ENCODE measurements at regions of chr2 and their contacts with region 1.

Region 1: DNA sequence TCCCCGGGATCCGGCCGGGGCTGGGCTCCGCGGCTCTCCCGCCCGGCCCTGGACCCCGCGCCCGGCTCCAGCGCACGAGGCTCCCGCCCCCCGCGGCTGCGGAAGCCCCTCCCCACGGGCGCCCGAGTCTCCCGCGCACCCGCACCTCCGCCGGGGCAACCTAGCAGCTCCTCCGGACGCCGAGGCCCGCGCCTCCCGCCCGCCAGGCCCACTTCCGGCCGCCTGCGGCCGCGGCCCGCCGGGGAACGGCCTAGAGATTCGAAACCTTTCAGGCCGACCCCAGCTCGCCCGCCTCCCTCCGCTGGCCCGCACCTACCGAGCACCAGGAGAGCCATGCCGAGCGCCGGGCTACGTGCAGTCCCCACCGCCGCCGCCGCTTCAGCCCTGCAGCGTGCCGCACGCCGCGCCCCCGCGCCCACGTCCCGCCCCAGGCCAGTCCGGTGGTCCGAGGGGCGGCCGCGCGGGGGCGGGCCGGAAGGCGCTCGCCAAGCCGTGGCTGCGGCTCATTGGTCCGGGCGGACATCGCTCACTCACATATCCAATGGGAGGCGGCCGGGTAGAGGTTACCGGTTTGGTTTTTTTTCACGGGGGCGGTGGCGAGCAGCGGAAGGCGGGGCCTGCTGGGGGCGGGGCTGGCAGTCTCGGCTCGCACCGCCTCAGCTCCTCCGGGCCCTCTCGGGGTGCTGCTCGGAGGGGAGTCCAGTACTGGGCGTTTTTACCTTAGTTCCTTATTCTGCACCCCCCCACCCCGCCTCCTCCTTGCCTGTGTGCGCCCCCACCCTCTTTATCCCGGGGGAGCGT is at the start of gene PDIA6:
- DNase-seq: peak; percentile 97
- ATAC-seq: peak; percentile 86
- H3K4me3 Mint-ChIP-seq: peak within 1 kb of the TSS; percentile 91
- H3K27ac Mint-ChIP-seq: peak within 1 kb of the TSS; percentile 95
- H3K4me1 Mint-ChIP-seq: peaks cover 41% of the 10 kb centered on the region
- H3K27me3 Mint-ChIP-seq: no peaks in the 10 kb centered on the region
- CTCF ChIP-seq: no peak
- total RNA-seq, gene PDIA6: 109 and 119 TPM in 2 replicates

Region 2: GRCh38 chr2:9843229-9844035 is 969.1 kb before region 1 on chr2 and contains the start of gene TAF1B:
- CTCF ChIA-PET with region 1: no interaction called
- POLR2A ChIA-PET with region 1: no interaction called
- intact Hi-C with region 1: loop called (anchors 5 kb)
- DNase-seq: peak; percentile 86
- ATAC-seq: peak; percentile 87
- H3K4me3 Mint-ChIP-seq: peak within 1 kb of the TSS; percentile 94
- H3K27ac Mint-ChIP-seq: peak within 1 kb of the TSS; percentile 91
- H3K4me1 Mint-ChIP-seq: peaks cover 34% of the 10 kb centered on the region
- H3K27me3 Mint-ChIP-seq: no peaks in the 10 kb centered on the region
- CTCF ChIP-seq: no peak
- total RNA-seq, gene TAF1B: 26.4 and 28.7 TPM in 2 replicates

Region 3: GRCh38 chr2:10122386-10123280 is 689.9 kb before region 1 on chr2 and contains the start of gene RRM2:
- CTCF ChIA-PET with region 1: no interaction called
- POLR2A ChIA-PET with region 1: no interaction called
- intact Hi-C with region 1: loop called (anchors 1 kb)
- DNase-seq: peak; percentile 77
- ATAC-seq: peak; percentile 82
- H3K4me3 Mint-ChIP-seq: peak within 1 kb of the TSS; percentile 97
- H3K27ac Mint-ChIP-seq: peak within 1 kb of the TSS; percentile 12
- H3K4me1 Mint-ChIP-seq: peaks cover 35% of the 10 kb centered on the region
- H3K27me3 Mint-ChIP-seq: peaks cover 8% of the 10 kb centered on the region
- CTCF ChIP-seq: no peak
- total RNA-seq, gene RRM2: 8.6 and 9.3 TPM in 2 replicates

Region 4: GRCh38 chr2:10721396-10722251 is 90.9 kb before region 1 on chr2 and contains the start of gene ATP6V1C2:
- CTCF ChIA-PET with region 1: no interaction called
- POLR2A ChIA-PET with region 1: no interaction called
- intact Hi-C with region 1: loop called (anchors 1 kb)
- DNase-seq: peak; percentile 49
- ATAC-seq: peak; percentile 76
- H3K4me3 Mint-ChIP-seq: peak within 1 kb of the TSS; percentile 82
- H3K27ac Mint-ChIP-seq: no peak within 1 kb of the TSS
- H3K4me1 Mint-ChIP-seq: peaks cover 18% of the 10 kb centered on the region
- H3K27me3 Mint-ChIP-seq: peaks cover 29% of the 10 kb centered on the region
- CTCF ChIP-seq: no peak
- total RNA-seq, gene ATP6V1C2: 3.3 and 3.5 TPM in 2 replicates

Region 5: GRCh38 chr2:11154923-11155380 is 342.4 kb after region 1 on chr2:
- CTCF ChIA-PET with region 1: no interaction called
- POLR2A ChIA-PET with region 1: interaction called, 7 read pairs
- intact Hi-C with region 1: loop called (anchors 1 kb)
- DNase-seq: peak; percentile 91
- ATAC-seq: peak; percentile 92
- H3K4me3 Mint-ChIP-seq: peak overlapping the region; percentile 85
- H3K27ac Mint-ChIP-seq: peak overlapping the region; percentile 84
- H3K4me1 Mint-ChIP-seq: peaks cover 20% of the 10 kb centered on the region
- H3K27me3 Mint-ChIP-seq: no peaks in the 10 kb centered on the region
- CTCF ChIP-seq: no peak

Region 6: DNA sequence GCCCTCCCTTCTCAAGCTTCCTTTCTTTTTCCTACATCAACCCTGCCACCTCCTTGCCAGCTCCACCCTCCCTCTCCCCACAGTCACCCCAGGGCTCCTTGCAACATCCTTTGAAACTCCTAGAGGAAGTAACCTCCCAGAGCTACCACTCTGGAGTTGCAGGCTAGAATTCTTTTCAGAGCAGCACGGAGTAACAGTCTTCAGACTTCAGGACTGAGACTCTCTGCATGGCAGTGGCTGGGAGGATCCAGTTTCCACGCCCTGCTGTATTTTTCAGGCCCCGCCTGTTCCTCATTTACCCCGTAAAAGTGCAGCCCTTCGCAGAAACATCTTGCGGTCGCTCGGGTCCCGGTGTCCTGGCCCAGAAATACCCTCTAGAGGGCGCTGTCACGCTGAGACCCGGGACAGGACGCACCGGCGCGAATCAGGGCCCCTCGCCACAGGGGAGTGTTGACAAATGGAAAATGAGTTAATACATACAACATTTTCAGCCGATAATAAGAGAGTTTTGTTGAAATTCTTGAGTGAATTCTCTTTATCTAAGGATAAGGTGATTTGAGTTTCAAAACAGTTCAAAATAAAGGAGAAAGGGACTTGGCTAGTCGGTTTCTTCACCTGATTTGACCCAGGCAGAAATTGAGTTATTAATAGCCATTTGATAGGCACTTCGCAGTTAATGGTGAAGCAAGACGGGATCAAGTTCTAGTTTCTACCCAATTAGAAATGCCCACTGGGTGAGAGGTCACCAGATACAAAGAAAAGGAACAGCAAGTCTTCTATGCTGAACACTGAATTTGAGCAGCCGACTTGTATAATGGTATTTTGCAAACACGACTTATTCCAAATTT is 875.9 kb after region 1 on chr2:
- CTCF ChIA-PET with region 1: no interaction called
- POLR2A ChIA-PET with region 1: no interaction called
- intact Hi-C with region 1: loop called (anchors 10 kb)
- DNase-seq: peak; percentile 68
- ATAC-seq: peak; percentile 87
- H3K4me3 Mint-ChIP-seq: peak overlapping the region; percentile 39
- H3K27ac Mint-ChIP-seq: no peak overlapping the region
- H3K4me1 Mint-ChIP-seq: peaks cover 9% of the 10 kb centered on the region
- H3K27me3 Mint-ChIP-seq: peaks cover 8% of the 10 kb centered on the region
- CTCF ChIP-seq: no peak

Measured in activated B cell treated with CpG ODN at 0.5 μM for 24 hours (primary cell).